Activated CD4-positive, alpha-beta T cell treated with anti-CD3 and anti-CD28 coated beads for 36 hours (primary cell): ENCODE measurements at regions of chr21 and their contacts with region 1.

Region 1: DNA sequence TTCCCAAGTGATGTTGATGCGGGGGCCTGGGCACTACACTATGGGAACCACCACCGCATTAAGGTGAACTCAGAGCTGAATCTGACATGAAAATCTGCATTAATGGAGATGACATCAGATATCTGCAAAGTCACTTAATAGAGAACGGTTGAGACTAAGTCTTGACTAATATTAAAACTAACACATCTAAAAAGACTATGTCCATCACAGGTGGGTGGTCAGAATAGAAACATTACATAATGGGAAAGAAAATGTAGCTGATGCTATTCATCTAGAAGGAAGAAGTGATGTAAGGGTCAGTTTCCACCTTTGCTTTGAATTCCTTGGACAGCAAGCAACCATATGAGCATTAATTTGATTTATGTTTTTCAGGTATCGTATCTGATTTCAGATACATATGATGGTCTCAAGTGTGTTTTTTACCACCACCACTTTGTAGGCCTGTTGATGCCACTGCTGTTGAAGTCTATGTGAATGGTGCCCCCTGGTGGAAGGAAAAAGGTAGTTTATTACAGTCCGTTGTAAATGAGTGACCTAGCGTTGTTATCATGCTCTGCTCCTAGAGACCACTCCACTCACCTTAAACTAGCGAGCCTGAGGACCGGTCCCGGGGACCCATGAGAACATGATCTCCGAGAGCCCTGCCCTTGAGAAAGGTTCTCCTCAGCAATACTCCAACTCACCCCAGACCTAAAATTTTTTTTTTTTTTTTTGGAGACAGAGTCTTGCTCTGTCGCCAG is 73.5 kb downstream of the BACH1 start:
- DNase-seq: peak; percentile 61
- ATAC-seq: peak; percentile 65
- H3K4me3 Mint-ChIP-seq: no peak overlapping the region
- H3K27ac Mint-ChIP-seq: peak overlapping the region; percentile 38
- H3K4me1 Mint-ChIP-seq: peaks cover 30% of the 10 kb centered on the region
- H3K27me3 Mint-ChIP-seq: no peaks in the 10 kb centered on the region

Region 2: GRCh38 chr21:28992526-28993292 is 379.5 kb before region 1 on chr21 and contains the start of gene LTN1:
- CTCF ChIA-PET with region 1: no interaction called
- POLR2A ChIA-PET with region 1: no interaction called
- intact Hi-C with region 1: loop called in 1 of 2 experiments (anchors 5 kb)
- DNase-seq: peak; percentile 100
- ATAC-seq: peak; percentile 92
- H3K4me3 Mint-ChIP-seq: peak within 1 kb of the TSS; percentile 83
- H3K27ac Mint-ChIP-seq: peak within 1 kb of the TSS; percentile 90
- H3K4me1 Mint-ChIP-seq: peaks cover 44% of the 10 kb centered on the region
- H3K27me3 Mint-ChIP-seq: no peaks in the 10 kb centered on the region
- total RNA-seq, gene LTN1: 26.6 to 29.4 TPM

Region 3: DNA sequence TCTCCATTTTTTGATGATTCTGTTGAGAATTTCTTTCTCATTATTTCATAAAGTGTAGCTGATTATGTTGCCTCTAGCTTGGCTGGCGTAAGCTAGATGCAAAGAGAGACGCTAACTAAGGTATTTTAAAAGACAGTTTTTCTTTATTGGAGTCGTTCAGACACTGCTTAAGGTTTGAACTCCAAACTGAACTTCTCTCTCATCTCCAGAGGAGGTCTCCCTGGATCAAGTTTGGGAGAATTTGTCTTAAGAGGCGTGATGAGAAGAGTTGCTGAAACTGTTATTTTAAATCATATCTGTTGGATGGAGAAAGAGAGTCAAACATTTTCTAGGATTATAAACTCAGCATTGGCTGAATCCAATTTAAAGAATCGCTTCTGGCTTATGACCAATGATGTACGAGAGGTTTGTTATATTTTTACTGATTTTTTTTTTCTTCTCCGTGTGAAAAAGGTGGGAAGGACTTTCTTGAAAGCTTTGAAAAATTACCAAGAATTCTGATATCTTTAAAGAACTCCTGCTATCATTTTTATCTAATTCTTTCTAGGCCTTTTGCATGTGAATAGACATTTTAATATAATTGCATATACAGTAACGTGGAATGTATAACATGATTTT is 207.8 kb before region 1 on chr21:
- CTCF ChIA-PET with region 1: interaction called, 7 read pairs
- POLR2A ChIA-PET with region 1: no interaction called
- intact Hi-C with region 1: loop called (anchors 1 to 5 kb)
- DNase-seq: no peak
- ATAC-seq: peak; percentile 44
- H3K4me3 Mint-ChIP-seq: no peak overlapping the region
- H3K27ac Mint-ChIP-seq: no peak overlapping the region
- H3K4me1 Mint-ChIP-seq: no peaks in the 10 kb centered on the region
- H3K27me3 Mint-ChIP-seq: no peaks in the 10 kb centered on the region

Region 4: GRCh38 chr21:29342363-29342957 is 29.8 kb before region 1 on chr21:
- CTCF ChIA-PET with region 1: interaction called, 15 read pairs
- POLR2A ChIA-PET with region 1: no interaction called
- intact Hi-C with region 1: loop called in 1 of 2 experiments (anchors 1 kb)
- DNase-seq: peak; percentile 79
- ATAC-seq: peak; percentile 94
- H3K4me3 Mint-ChIP-seq: peak overlapping the region; percentile 29
- H3K27ac Mint-ChIP-seq: peak overlapping the region; percentile 79
- H3K4me1 Mint-ChIP-seq: peaks cover 42% of the 10 kb centered on the region
- H3K27me3 Mint-ChIP-seq: no peaks in the 10 kb centered on the region

Region 5: DNA sequence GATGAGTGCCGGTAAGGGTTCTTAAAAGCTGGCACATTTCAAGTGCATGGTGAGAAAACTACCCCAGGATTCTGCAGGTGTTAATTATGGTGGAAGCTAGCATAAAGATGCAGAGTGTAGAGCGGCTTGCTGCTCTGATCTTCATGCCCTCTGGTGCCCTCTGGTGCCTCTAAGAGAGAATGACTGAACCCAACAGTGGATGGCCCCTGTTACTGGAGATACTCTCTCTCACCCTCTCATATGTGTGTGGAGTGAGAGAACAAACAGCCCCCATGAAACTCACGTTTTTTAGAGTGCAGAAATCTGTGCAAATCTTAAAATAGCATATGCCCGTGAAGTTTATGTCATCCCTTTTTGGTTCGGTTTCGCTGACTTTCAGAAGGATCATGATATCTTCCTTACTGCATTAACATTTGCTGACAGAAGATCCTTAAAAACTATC is 477.5 kb after region 1 on chr21:
- CTCF ChIA-PET with region 1: interaction called, 5 read pairs
- POLR2A ChIA-PET with region 1: no interaction called
- intact Hi-C with region 1: loop called in 1 of 2 experiments (anchors 5 kb)
- DNase-seq: peak; percentile 64
- ATAC-seq: peak; percentile 95
- H3K4me3 Mint-ChIP-seq: no peak overlapping the region
- H3K27ac Mint-ChIP-seq: no peak overlapping the region
- H3K4me1 Mint-ChIP-seq: no peaks in the 10 kb centered on the region
- H3K27me3 Mint-ChIP-seq: peaks cover 14% of the 10 kb centered on the region